ENCODE measurements at regions of chr6 and their contacts with region 1.

Region 1: DNA sequence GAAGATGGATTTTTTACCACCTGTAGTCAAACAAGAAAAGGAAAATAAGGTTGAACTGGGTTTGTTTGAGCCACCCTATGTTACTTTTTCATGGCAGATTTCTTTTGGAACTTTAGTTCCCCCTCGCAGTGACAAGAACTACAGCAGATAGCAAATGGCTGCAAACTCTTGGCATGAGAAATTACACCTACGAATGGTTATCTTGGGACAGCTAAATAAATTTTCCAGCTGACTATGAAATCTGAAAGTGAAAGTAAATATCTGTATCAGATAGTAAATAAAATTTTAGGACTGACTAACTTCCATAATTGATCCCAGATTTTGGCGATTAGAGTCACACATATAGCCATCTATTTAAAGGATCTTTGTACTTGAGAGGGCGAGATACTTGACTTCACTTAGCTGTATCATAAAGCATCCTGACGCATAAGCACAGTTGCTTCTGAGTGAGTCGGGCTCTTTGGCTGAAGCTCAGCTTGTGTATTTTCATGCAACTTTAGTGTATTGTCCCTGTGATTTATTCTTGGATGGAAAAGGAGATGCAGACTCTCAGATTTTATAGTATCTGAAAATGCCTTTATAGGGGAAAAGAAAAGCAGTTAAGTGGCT is 125.3 kb upstream of the B3GAT2 start:
- DNase-seq: no peak
- ATAC-seq: peak in 2 of 4 donors; percentile 15 to 23
- H3K4me3 ChIP-seq: peak overlapping the region in 9 of 12 donors; percentile 7 to 42 (median 34)
- H3K27ac ChIP-seq: peak overlapping the region in 10 of 12 donors; percentile 19 to 78 (median 50)
- H3K4me1 ChIP-seq: peaks cover 0 to 37% (median 13%) of the 10 kb centered on the region in 12 donors
- H3K27me3 ChIP-seq: no peaks in the 10 kb centered on the region
- CTCF ChIP-seq: no peak
- POLR2A ChIP-seq: no peak

Region 2: DNA sequence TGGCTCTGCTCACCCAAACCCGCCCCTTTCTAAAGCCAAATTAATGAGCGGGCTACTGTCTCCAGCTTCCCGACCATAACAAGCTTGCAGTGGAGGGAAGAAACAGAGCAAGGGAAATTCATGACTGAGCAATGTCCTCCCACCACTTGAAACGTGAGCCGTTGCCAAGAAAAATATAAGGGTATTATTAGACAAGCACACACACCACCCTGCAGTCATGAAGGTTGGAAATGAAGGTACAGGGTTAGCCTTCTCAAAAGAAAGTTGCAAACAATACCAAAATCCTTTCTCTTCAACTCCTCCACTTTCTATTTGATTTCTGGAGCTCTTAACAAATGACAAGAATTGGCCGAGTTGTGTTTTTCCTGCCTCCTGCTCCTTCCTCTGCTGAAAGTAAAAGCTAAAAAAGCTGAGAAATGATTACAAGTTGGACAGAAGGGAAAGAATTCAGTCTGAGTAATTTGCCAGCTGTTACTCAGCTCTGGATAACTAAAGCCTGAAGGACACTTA is 25.8 kb after region 1 on chr6:
- intact Hi-C with region 1: loop called in 1 of 10 experiments (anchors 2 kb)
- DNase-seq: peak in 4 of 5 donors; percentile 27 to 31 (median 28)
- ATAC-seq: peak; percentile 90 to 97 (median 91)
- H3K4me3 ChIP-seq: peak overlapping the region in 10 of 12 donors; percentile 7 to 46 (median 26)
- H3K27ac ChIP-seq: peak overlapping the region in 11 of 12 donors; percentile 8 to 72 (median 52)
- H3K4me1 ChIP-seq: peaks cover 0 to 31% (median 13%) of the 10 kb centered on the region in 12 donors
- H3K27me3 ChIP-seq: no peaks in the 10 kb centered on the region
- CTCF ChIP-seq: no peak
- POLR2A ChIP-seq: no peak

Region 3: GRCh38 chr6:71127374-71127773 is 45.2 kb after region 1 on chr6:
- intact Hi-C with region 1: no loop called
- DNase-seq: no peak
- ATAC-seq: no peak
- H3K4me3 ChIP-seq: no peak overlapping the region
- H3K27ac ChIP-seq: no peak overlapping the region
- H3K4me1 ChIP-seq: no peaks in the 10 kb centered on the region
- H3K27me3 ChIP-seq: no peaks in the 10 kb centered on the region
- CTCF ChIP-seq: no peak
- POLR2A ChIP-seq: no peak